ENCODE measurements at regions of chr2 and their contacts with region 1.

Region 1: DNA sequence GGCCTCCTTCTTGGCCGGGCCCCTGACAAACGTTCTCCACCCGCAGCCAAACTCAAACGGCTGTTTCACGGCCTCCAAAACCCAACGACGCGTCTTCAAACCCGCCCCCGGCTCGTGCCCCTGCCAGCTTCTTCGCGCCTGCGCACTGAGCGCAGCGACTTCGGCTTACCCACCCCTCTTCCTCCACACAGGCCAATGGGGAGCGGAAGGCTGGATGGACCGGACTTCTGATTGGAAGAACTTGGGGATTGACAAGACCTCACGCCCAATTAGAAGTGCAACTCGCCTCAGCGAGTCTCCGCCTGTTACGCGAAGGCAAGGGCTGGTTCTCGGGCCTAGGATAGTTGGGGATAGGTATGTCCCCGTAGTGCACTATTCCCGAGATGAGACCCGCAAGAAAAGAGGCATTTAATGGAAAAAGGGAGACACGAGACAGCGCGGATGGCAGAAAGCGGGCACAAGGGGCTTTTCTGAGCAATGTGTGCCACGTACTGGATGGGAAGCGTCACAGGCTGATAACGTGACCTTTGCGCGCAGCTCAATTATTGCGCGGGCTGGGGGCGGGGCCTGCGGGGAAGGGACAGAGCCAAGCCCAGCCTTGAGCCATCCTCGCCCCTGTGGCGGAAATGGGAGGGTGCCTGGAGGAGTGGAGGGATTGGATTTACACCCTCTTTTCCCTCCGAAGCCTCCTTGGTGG is at the start of gene LAPTM4A:
- DNase-seq: peak; percentile 99
- H3K4me3 ChIP-seq: peak within 1 kb of the TSS; percentile 89
- H3K27ac ChIP-seq: peak within 1 kb of the TSS; percentile 74
- H3K4me1 ChIP-seq: peaks cover 27% of the 10 kb centered on the region
- CTCF ChIP-seq: no peak
- total RNA-seq, gene LAPTM4A: 6.5 and 8.4 TPM in 2 replicates

Region 2: DNA sequence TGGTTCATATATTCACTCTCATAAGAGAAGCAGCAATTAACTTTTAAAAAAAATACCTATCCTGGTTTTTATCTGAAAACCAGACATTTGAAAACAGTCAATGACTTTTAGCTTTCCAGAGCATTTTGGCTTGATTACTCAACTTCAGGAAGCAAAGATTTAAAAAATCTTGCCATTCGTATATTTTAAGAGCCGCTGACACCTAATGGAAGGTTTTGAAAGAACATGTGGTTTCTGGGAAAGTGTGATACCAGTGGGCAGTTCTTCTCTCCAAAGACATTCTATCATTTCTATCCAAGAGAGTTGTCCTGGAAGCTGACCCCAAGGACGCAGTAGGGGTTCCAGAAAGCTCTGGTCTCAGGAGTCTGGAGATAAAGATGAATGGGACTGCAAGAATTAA is 384.6 kb before region 1 on chr2:
- CTCF ChIA-PET with region 1: no interaction called
- POLR2A ChIA-PET with region 1: no interaction called
- intact Hi-C with region 1: no loop called
- DNase-seq: no peak
- H3K4me3 ChIP-seq: no peak overlapping the region
- H3K27ac ChIP-seq: no peak overlapping the region
- H3K4me1 ChIP-seq: no peaks in the 10 kb centered on the region
- CTCF ChIP-seq: 0 out of 2 replicates have a peak, but pooled peaks have one; percentile 25

Region 3: DNA sequence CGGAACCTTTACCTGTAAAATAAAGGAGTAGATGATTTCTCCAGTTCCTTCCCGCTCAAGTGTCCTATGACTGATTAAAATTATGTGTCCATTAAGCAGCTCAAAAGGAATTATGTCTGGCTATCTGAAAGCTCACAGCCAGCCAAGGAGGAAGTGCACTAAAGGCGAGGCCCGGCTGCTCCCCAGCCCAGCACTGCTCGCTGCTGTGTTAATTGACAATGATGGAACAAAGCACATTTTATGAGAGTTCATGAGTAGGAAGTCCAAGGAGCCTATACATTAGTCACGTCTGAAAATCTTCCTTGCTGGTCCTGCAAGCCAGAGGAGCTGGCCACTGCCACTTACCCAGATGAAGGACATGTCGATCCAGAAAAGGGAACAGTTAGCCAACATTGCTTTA is 164.2 kb before region 1 on chr2:
- CTCF ChIA-PET with region 1: no interaction called
- POLR2A ChIA-PET with region 1: no interaction called
- intact Hi-C with region 1: no loop called
- DNase-seq: no peak
- H3K4me3 ChIP-seq: no peak overlapping the region
- H3K27ac ChIP-seq: no peak overlapping the region
- H3K4me1 ChIP-seq: peaks cover 5% of the 10 kb centered on the region
- CTCF ChIP-seq: no peak

Region 4: DNA sequence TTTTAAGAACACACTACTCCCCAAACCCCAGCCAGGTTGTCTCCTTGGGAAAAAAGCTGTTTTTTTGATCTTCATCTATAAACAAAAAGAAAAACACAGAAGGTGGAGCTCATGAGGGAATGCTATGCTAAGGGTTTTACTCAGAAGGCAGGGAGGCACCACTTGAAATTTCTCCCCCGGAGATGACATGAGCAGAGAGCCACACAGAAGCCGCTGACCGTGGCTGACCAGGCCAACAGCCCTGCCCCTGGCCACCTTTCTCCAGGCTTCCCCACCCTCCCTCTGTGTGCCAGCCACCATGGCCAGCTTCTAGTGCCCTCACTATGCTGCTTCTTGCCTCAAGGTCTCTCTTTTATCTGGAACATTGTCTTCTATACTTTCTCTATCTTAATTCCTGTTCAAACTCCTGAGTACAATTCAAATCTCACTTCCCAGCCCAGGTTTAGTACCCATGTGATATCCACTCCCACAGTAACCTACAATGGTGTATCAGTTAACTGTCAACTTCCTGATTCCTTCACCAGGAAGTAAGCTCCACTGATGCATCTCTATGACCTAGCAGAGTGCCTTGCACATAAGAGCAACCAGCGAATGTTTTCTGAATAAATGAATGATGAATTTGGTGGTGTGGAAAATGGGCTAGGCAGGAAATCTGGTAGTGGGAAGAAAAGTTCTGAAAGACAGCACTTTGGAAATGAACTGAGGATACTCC is 15.6 kb before region 1 on chr2:
- CTCF ChIA-PET with region 1: interaction called, 5 read pairs
- POLR2A ChIA-PET with region 1: interaction called, 32 read pairs
- intact Hi-C with region 1: no loop called
- DNase-seq: peak; percentile 61
- H3K4me3 ChIP-seq: no peak overlapping the region
- H3K27ac ChIP-seq: peak overlapping the region; percentile 28
- H3K4me1 ChIP-seq: peaks cover 15% of the 10 kb centered on the region
- CTCF ChIP-seq: no peak

Region 5: DNA sequence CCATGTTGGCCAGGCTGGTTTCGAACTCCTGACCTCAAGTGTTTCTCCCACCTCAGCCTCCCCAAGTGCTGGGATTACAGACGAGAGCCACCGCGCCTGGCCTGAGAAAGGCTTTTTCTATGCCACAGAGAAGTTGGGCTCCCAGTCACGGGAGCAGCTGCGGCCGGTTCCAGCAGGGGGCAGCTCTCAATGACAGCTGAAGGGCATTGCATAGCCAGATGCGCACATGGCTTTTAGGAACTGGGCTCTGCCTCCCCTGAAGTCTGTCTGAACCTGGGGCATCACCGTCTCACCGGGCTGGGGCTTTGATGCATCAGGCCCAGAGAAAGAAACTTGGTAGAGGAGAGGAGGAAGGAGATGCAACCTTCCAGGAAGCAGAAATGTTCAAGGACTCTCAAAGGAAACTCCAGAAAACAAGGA is 84.0 kb after region 1 on chr2:
- CTCF ChIA-PET with region 1: no interaction called
- POLR2A ChIA-PET with region 1: no interaction called
- intact Hi-C with region 1: no loop called
- DNase-seq: peak; percentile 55
- H3K4me3 ChIP-seq: no peak overlapping the region
- H3K27ac ChIP-seq: no peak overlapping the region
- H3K4me1 ChIP-seq: no peaks in the 10 kb centered on the region
- CTCF ChIP-seq: peak; percentile 76

Region 6: GRCh38 chr2:20225294-20226151 is 173.8 kb after region 1 on chr2:
- CTCF ChIA-PET with region 1: no interaction called
- POLR2A ChIA-PET with region 1: no interaction called
- intact Hi-C with region 1: no loop called
- DNase-seq: peak; percentile 29
- H3K4me3 ChIP-seq: no peak overlapping the region
- H3K27ac ChIP-seq: no peak overlapping the region
- H3K4me1 ChIP-seq: peaks cover 6% of the 10 kb centered on the region
- CTCF ChIP-seq: peak; percentile 65